Endothelial cell of umbilical vein (primary cell): ENCODE measurements at regions of chr13 and their contacts with region 1.

Region 1: GRCh38 chr13:52850396-52851136 is 2.1 kb upstream of the PCDH8 start:
- DNase-seq: peak; percentile 20
- H3K4me3 ChIP-seq: peak overlapping the region; percentile 42 to 56 (median 45)
- H3K27ac ChIP-seq: no peak overlapping the region
- H3K4me1 ChIP-seq: peaks cover 5% of the 10 kb centered on the region
- H3K27me3 ChIP-seq: peaks cover 48 to 70% of the 10 kb centered on the region in 2 experiments
- CTCF ChIP-seq: no peak
- POLR2A ChIP-seq: no peak

Region 2: DNA sequence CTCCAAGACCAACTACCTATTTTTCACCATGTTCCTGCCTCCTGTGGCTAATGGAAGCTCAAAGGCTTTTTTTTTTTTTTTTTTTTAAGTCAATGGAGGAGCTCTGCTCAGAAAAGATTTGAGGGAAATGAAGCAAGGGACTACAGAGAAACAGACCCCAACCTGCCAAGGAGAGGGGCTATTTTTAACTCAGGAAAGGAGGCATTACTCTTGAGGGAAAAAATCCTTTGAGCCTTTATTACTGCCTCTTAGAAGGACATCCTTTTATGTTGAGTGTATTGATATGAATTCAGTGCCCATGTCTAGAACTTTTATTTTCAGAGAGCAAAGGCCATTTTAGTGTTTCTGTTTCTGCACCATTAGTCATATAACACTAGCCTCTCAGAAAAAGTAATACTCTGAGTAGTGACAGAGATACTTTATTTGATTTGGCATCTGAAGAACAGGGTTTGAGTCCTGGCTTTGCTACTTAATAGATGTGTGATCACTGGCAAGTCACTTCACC is 66.0 kb after region 1 on chr13:
- CTCF ChIA-PET with region 1: no interaction called
- POLR2A ChIA-PET with region 1: no interaction called
- dilution Hi-C with region 1: no loop called
- intact Hi-C with region 1: loop called (anchors 2 kb)
- DNase-seq: no peak
- H3K4me3 ChIP-seq: no peak overlapping the region
- H3K27ac ChIP-seq: no peak overlapping the region
- H3K4me1 ChIP-seq: no peaks in the 10 kb centered on the region
- H3K27me3 ChIP-seq: no peaks in the 10 kb centered on the region
- CTCF ChIP-seq: no peak
- POLR2A ChIP-seq: no peak